Transverse colon (tissue), 4 donors: ENCODE measurements at regions of chr15 and their contacts with region 1.

Region 1: DNA sequence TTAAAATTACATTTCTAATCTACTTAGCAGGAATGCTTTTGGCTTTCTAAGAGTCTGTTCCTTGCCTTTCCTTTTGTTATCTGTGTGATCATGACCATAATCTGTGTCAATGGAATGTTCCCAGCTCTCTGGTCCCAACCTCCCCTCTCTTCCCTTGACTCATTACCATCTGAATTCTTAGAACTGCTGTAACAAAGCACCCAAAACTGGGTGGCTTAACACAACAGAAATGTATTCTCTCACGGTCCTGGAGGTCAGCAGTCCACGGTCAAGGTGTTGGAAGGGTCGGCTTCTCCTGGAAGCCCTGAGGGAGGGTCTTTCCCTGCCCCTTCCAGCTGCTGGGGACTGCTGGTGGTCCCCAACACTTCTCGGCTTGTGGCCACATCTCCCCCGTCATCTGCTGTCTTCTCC is 81.1 kb downstream of the LRRK1 start:
- DNase-seq: no peak
- H3K4me3 ChIP-seq: no peak overlapping the region
- H3K27ac ChIP-seq: no peak overlapping the region
- H3K4me1 ChIP-seq: peaks cover 0 to 23% (median 2%) of the 10 kb centered on the region in 4 donors
- H3K27me3 ChIP-seq: no peaks in the 10 kb centered on the region
- CTCF ChIP-seq: no peak
- EP300 ChIP-seq: no peak
- POLR2A ChIP-seq: no peak

Region 2: DNA sequence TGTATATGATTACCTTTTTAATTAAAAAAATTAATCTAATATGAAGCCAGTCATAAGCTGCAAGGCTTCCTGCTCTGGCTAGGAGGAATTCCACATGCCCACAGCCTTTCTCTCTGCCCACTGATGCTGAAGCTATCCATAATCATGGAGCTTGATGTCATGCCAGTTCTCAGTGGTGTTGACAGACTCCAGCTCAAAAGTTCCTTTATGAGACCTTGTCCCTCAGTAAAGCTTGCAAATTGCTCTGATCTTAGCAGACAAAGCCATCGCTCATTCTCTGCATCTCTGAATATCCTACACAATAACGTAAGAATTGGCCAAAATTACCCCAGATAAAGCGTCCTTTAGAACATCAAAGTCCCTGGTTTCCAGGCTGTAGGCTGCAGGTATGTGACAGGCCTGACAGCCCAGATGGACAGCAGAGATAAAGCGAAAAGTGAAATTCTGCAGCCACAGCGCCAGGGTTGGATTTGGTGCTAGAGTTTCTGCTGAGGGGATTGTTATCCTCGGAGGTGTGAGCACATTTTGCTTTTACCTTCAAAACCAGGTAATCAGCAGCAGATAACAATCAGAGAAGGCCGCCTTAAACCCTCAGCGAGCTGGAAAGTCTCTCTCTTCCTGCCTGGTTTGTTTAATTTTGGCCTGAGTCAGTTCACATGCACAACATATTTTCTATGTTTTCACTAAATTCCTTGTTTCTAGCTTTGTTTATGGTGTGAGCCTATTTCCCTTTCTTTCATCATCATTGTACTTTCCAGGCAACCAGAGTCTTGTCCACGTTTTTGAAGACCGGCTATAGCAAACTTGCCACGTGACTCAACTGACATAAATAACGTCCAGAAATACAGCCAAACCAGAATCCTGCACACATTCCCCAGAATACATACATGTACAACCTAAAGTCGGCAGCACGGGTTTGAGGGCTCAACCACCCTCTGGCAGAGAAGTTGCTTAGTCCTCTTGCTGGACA is 157.2 kb before region 1 on chr15:
- in situ Hi-C with region 1: no loop called
- intact Hi-C with region 1: loop called (anchors 2 kb)
- DNase-seq: no peak
- H3K4me3 ChIP-seq: no peak overlapping the region
- H3K27ac ChIP-seq: no peak overlapping the region
- H3K4me1 ChIP-seq: no peaks in the 10 kb centered on the region
- H3K27me3 ChIP-seq: no peaks in the 10 kb centered on the region
- CTCF ChIP-seq: no peak
- EP300 ChIP-seq: no peak
- POLR2A ChIP-seq: no peak

Region 3: DNA sequence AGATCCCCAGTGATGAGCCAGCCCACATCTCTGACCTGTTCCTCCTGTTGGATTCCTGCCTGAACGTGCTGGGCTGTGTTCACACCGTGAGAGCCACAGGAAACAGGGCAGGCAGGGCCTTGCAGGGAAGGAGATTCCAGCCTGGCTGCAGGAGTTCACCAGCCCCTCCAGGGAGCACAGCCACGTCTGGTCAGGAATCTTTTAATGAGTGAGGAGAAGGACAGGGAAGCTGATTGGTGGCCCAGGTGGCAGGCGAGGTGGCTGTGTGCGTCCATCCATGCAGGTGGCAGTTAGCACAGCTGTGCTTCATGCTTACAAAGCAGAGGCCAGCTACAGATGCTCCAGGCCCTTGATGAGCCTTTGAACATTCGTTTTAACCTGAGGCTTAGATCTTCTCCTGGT is 70.6 kb before region 1 on chr15:
- in situ Hi-C with region 1: loop called in 2 of 4 experiments (anchors 5 to 25 kb)
- intact Hi-C with region 1: no loop called
- DNase-seq: no peak
- H3K4me3 ChIP-seq: no peak overlapping the region
- H3K27ac ChIP-seq: no peak overlapping the region
- H3K4me1 ChIP-seq: peaks cover 0 to 27% (median 14%) of the 10 kb centered on the region in 4 donors
- H3K27me3 ChIP-seq: no peaks in the 10 kb centered on the region
- CTCF ChIP-seq: no peak
- EP300 ChIP-seq: no peak
- POLR2A ChIP-seq: no peak

Region 4: DNA sequence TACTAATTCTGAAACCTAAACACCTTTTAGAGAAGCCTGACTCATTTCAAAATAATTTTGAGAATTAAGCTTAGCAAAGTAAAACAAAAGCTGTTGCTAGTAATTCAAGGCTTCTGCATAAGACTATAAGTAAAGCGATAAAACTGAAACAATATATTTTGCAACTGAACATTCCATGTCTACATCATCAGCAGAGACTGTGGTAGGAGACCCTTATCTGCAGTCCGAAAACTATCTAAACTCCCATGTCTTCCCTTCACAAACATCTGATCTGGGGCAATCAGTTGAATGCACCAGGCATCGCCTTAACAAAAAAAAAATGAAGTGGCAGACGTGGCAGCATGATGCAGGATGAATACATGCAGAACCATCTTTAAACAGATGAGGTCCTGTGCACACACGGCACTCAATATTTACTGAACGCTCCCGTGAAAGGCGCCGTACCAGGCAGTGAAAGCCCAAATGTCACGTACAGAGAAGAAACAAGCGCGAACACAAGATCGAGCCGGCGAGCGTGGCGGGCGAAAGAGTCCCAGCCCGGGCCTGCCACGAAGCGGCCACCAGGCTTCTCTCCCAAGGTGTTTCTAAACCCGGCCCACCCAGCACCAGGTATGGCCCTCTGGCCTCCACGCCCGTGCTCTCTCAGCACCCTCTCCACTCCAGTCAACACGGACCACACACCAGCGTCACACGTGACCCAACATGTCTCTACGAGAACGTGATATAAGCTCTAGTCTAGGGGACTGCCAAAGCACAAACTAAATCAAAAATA is 188.5 kb after region 1 on chr15:
- in situ Hi-C with region 1: no loop called
- intact Hi-C with region 1: no loop called
- DNase-seq: no peak
- H3K4me3 ChIP-seq: peak overlapping the region in 1 of 4 donors; percentile 11
- H3K27ac ChIP-seq: peak overlapping the region; percentile 55 to 66 (median 61)
- H3K4me1 ChIP-seq: peaks cover 0 to 54% (median 8%) of the 10 kb centered on the region in 4 donors
- H3K27me3 ChIP-seq: no peaks in the 10 kb centered on the region
- CTCF ChIP-seq: no peak
- EP300 ChIP-seq: no peak
- POLR2A ChIP-seq: no peak